ENCODE measurements at regions of chr7 and their contacts with region 1.

Region 1: DNA sequence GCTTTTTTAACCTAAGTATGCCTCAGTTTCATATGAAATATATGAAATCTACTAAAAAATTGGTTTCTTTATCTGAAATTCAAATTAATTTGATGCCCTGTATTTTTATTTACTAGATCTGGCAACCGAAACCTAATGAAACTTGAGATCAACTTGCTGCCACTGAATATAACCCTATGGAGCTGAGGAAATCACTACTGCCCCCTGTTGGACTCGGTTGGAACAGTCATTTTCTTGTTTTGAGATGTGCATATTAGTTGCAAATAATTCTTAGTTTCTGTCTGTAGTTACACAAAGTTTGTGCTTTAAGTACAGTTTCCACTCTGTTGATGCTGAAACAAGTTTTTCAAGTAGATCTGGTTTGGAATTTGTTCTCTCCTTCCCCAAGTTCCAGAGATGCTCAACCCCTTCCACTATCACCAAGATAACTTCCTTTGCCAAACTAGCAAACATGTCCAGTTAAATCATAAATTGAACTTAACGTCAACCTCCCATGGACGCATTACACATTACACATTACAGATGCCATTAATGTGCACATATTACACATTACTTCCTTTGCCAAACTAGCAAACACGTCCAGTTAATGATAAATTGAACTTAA is 22.2 kb upstream of the EXOC4 start:
- DNase-seq: peak; percentile 69
- ATAC-seq: no peak
- H3K4me3 Mint-ChIP-seq: no peak overlapping the region
- H3K27ac Mint-ChIP-seq: no peak overlapping the region
- H3K4me1 Mint-ChIP-seq: no peaks in the 10 kb centered on the region
- H3K27me3 Mint-ChIP-seq: peaks cover 3% of the 10 kb centered on the region

Region 2: GRCh38 chr7:132318352-132319318 is 912.1 kb before region 1 on chr7:
- CTCF ChIA-PET with region 1: no interaction called
- POLR2A ChIA-PET with region 1: no interaction called
- intact Hi-C with region 1: loop called (anchors 2 to 5 kb)
- DNase-seq: peak; percentile 88
- ATAC-seq: peak; percentile 95
- H3K4me3 Mint-ChIP-seq: peak overlapping the region; percentile 17
- H3K27ac Mint-ChIP-seq: no peak overlapping the region
- H3K4me1 Mint-ChIP-seq: peaks cover 10% of the 10 kb centered on the region
- H3K27me3 Mint-ChIP-seq: peaks cover 35% of the 10 kb centered on the region

Region 3: GRCh38 chr7:132394283-132395198 is 836.2 kb before region 1 on chr7:
- CTCF ChIA-PET with region 1: no interaction called
- POLR2A ChIA-PET with region 1: no interaction called
- intact Hi-C with region 1: loop called in 1 of 2 experiments (anchors 5 kb)
- DNase-seq: peak; percentile 27
- ATAC-seq: no peak
- H3K4me3 Mint-ChIP-seq: no peak overlapping the region
- H3K27ac Mint-ChIP-seq: no peak overlapping the region
- H3K4me1 Mint-ChIP-seq: no peaks in the 10 kb centered on the region
- H3K27me3 Mint-ChIP-seq: peaks cover 2% of the 10 kb centered on the region

Region 4: DNA sequence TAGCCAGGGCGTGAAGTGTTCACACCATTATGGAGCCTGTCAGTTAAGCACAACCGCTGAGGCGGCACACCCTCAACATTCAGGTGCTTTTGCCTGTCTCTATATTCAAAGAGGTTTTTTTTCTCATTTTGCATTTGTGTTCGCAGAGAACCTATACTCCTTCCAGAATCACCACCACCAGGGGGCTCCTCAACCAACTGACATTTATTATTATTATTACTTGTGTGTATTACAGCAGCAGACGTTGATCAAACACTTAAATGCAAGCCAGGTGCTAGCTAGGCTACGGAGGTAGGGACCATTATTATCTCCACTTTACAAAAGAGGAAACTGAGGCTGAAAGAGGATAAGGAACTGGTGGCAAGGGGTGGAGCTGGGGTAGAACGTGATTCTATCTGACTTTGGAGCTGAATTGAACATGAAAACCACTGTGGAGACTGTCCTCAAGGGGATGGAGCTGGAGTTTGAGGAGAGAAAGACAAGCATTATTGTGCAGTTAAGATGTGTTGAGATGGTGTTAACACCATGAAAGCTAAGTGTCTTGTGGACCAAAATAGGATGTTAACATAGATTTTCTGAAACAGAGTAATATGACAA is 520.6 kb before region 1 on chr7:
- CTCF ChIA-PET with region 1: interaction called, 5 read pairs
- POLR2A ChIA-PET with region 1: no interaction called
- intact Hi-C with region 1: loop called in 1 of 2 experiments (anchors 10 kb)
- DNase-seq: peak; percentile 29
- ATAC-seq: no peak
- H3K4me3 Mint-ChIP-seq: no peak overlapping the region
- H3K27ac Mint-ChIP-seq: no peak overlapping the region
- H3K4me1 Mint-ChIP-seq: no peaks in the 10 kb centered on the region
- H3K27me3 Mint-ChIP-seq: no peaks in the 10 kb centered on the region

Region 5: DNA sequence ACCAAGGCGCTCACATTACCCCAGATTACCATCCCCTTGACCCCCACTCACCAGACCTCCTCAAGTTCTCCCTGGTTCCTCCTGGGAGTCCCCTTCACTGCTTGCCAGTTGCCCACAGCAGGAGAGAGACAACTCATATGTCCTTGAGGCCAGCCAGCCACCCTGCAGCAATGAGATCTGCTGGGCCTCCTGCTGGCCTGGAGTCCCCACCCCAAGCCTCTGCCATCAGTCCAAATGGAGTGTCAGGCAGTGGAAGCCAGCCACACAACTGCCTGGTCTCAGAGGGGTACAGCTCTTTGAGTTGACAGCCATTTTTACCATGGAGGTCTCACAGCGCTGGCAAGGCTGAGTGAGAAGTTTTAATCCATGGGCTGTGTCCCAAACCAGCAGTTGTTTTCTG is 30.9 kb before region 1 on chr7:
- CTCF ChIA-PET with region 1: no interaction called
- POLR2A ChIA-PET with region 1: no interaction called
- intact Hi-C with region 1: no loop called
- DNase-seq: no peak
- ATAC-seq: no peak
- H3K4me3 Mint-ChIP-seq: no peak overlapping the region
- H3K27ac Mint-ChIP-seq: no peak overlapping the region
- H3K4me1 Mint-ChIP-seq: no peaks in the 10 kb centered on the region
- H3K27me3 Mint-ChIP-seq: peaks cover 6% of the 10 kb centered on the region

Region 6: DNA sequence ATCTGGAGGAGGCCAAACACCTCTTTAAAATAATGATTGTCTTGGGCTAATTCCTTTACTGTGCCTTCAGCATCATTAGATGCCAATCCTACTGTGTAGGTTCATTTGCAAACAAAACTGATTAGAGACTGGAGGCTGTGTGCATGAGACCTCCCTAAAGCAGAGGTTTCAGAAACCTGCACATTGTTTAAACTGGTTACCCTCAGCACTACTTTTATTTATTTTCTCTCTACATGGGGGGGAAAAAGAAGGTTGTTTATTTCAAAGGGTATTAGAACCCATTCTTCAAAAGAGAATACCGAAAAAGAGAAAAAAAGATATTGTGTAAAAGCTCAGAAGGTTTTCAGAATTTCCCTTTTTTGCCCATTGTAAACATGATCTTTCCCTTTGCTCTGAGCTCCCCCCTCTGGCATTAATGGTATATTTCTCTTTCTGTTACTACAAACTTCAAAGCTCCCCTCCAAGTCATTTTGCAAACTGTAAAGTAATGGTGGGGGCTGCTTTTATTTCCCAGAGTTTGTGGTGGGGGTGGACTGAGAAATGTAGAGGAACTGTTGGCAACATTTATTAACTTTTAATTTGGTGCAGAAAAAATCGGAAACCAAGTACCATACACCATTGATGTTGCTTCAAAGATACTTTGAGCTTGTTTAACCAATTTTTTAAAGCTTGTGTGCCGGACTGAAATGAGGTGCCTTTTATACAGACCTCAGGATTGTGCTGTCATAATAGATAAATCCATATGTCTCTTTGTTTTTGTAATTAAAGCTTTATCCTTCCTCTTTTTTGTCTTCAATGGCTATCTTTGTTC is 203.6 kb after region 1 on chr7:
- CTCF ChIA-PET with region 1: interaction called, 5 read pairs
- POLR2A ChIA-PET with region 1: no interaction called
- intact Hi-C with region 1: loop called in 1 of 2 experiments (anchors 5 kb)
- DNase-seq: no peak
- ATAC-seq: no peak
- H3K4me3 Mint-ChIP-seq: no peak overlapping the region
- H3K27ac Mint-ChIP-seq: no peak overlapping the region
- H3K4me1 Mint-ChIP-seq: no peaks in the 10 kb centered on the region
- H3K27me3 Mint-ChIP-seq: no peaks in the 10 kb centered on the region

Measured in activated CD4-positive, alpha-beta T cell treated with anti-CD3 and anti-CD28 coated beads for 36 hours (primary cell).